Aorta (tissue), 5 donors: ENCODE measurements at regions of chr17 and their contacts with region 1.

Region 1: DNA sequence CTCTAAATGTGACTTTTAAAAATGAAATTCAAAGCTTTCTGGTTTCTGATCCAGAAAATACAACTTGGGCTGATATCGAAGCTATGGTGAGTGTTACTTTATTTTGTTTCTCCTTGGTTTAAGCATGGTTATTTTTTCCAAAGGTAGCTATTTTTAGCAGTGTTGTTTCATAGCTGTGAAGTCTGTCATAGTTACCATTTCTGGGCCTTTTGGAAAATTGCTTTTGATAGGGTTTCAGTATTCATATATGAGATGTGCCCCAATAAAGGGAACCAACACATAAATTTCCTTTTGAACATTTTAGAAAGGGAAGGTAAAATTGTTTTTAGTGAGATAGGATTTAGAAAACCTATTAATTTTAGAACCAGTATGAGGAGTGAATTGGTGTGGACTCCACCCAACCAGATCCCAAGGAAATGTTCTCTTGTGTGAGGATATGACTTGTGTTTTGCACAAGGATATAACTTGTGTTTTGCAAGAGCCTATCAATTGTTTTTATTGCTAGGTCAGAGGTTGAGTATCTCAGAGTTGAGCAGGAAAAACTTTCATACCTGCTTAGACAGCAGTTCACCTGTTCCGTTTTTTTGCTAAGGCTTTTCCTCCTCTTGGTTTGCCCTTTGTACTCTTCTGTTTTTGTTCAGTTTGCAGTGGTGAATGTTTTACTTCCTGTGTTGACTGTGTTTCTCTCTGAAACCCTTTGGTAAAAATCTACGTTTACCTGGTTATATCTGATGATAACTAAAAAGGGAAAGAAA is 5.0 kb downstream of the NBR1 start:
- DNase-seq: no peak
- ATAC-seq: no peak
- H3K4me3 ChIP-seq: no peak overlapping the region
- H3K27ac ChIP-seq: peak overlapping the region; percentile 33 to 97
- H3K4me1 ChIP-seq: peaks cover 0 to 4% of the 10 kb centered on the region in 2 donors
- H3K27me3 ChIP-seq: no peaks in the 10 kb centered on the region

Region 2: DNA sequence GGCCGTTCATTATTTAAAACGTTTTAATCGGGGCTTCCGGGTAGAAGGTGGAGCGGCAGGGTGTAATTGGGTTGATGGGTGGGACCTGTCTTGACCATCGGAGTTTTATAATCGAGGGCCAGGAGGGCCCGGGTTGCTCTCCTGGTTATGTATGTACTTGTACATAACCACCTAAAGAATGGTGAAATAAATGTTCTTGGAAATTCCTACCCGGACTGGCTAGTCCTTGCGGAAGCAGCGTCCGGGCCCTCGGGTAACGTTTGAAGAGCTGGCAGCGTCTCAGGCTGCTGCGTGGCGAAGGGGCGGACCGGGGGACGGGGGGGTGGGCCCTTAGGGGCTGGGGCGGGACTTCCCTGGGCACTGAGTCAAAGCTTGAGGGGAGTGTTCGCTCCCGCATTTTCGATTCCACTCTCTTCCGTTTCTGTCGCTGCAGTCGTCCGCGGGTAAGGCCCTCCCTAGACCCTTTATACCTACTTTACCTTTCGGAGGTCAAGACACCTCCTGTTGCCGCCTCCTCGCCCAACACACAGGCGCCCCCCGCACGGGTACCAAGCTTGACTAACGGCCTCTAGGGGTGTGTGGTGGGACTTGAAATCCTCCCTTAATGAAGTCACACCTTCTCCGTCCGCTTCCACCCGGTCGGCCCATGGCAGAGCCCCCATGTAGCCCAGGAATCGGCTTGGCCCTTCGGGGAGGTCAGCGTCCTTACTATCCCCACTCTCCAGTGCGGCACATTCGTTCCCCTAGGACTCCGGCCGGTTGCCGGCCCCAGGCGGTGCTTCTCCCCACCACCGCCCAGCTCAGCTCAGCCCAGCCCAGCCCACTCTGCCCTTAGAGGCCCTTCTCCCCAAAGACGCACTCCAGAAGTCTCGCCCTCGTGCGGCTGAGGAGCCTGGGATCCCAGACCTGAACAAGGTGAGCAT is 35.7 kb after region 1 on chr17 and contains the start of gene TMEM106A:
- intact Hi-C with region 1: loop called in 1 of 2 experiments (anchors 5 kb)
- DNase-seq: peak; percentile 90 to 94
- ATAC-seq: peak; percentile 88
- H3K4me3 ChIP-seq: peak within 1 kb of the TSS; percentile 43 to 87
- H3K27ac ChIP-seq: peak within 1 kb of the TSS; percentile 69 to 70
- H3K4me1 ChIP-seq: no peaks in the 10 kb centered on the region
- H3K27me3 ChIP-seq: no peaks in the 10 kb centered on the region
- total RNA-seq, gene TMEM106A: 20.2 to 37.2 TPM

Region 3: GRCh38 chr17:43418441-43419374 is 242.7 kb after region 1 on chr17:
- intact Hi-C with region 1: no loop called
- DNase-seq: peak; percentile 79 to 82
- ATAC-seq: peak; percentile 58
- H3K4me3 ChIP-seq: no peak overlapping the region
- H3K27ac ChIP-seq: no peak overlapping the region
- H3K4me1 ChIP-seq: peaks cover 0 to 9% of the 10 kb centered on the region in 2 donors
- H3K27me3 ChIP-seq: no peaks in the 10 kb centered on the region